HCT116 (cell line): ENCODE measurements at regions of chr17 and their contacts with region 1.

Region 1: DNA sequence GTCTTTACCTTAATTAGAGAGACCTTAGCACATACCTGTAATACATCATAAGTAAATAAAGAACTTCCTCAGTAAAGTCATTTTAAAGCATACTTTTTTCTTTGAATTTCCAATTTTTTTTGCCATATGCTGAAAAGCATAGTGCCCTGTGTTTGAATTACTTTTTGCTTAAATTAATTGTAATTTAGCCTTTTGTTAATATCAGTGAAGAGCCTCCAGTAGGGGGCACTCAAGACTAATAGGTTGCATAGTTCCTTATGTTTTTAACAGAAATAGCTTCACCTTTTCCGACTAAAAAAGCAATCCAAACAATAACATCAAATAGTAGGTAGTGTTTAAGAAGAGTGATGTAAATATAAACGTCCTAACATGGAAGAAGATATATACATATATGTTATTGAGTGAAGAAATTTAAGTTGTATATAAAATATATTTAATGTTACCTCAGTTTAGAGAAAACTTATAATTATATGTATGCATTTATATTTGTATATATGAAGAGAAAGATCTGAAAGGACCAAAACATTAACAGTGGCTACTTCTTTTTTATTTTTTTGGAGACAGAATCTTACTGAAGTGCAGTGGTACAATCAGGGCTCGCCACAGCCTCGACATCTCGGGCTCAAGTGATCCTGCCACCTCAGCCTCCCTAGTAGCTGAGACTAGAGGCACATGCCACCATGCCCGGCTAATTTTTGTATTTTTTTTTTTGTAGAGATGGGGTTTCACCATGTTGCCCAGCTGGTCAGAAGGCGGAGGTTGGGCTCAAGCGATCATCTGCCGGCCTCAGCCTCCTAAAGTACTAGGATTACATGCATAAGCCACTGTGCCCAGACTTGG is 18.8 kb downstream of the RAD51C start:
- DNase-seq: peak; percentile 56
- ATAC-seq: peak; percentile 64
- H3K4me3 ChIP-seq: no peak overlapping the region
- H3K27ac ChIP-seq: no peak overlapping the region
- H3K4me1 ChIP-seq: no peaks in the 10 kb centered on the region
- H3K27me3 ChIP-seq: no peaks in the 10 kb centered on the region
- CTCF ChIP-seq: peak; percentile 79 to 98 (median 85)
- POLR2A ChIP-seq: no peak
- RAD21 ChIP-seq: peak; percentile 94

Region 2: DNA sequence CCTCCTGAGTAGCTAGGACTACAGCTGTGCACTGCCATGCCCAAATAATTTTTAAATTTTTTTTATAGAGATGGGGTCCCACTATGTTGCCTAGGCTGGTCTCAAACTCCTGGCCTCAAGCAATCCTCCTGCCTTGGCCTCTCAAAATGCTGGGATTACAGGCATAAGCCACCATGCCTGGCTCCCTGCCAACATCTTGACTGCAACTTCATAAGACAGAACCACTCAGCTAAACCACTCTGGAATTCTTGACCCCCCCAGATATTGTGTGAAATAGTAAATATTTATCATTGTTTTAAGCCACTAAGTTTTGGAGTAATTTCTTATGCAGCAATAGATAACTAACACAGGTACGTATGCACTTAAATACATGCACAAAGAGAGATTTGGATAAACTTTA is 602.0 kb before region 1 on chr17:
- CTCF ChIA-PET with region 1: no interaction called
- POLR2A ChIA-PET with region 1: no interaction called
- RAD21 ChIA-PET with region 1: no interaction called
- intact Hi-C with region 1: no loop called
- DNase-seq: no peak
- ATAC-seq: no peak
- H3K4me3 ChIP-seq: no peak overlapping the region
- H3K27ac ChIP-seq: no peak overlapping the region
- H3K4me1 ChIP-seq: peaks cover 0 to 3% of the 10 kb centered on the region in 2 experiments; a peak in 1 of 4 replicates
- H3K27me3 ChIP-seq: no peaks in the 10 kb centered on the region
- CTCF ChIP-seq: no peak
- POLR2A ChIP-seq: no peak
- RAD21 ChIP-seq: no peak

Region 3: DNA sequence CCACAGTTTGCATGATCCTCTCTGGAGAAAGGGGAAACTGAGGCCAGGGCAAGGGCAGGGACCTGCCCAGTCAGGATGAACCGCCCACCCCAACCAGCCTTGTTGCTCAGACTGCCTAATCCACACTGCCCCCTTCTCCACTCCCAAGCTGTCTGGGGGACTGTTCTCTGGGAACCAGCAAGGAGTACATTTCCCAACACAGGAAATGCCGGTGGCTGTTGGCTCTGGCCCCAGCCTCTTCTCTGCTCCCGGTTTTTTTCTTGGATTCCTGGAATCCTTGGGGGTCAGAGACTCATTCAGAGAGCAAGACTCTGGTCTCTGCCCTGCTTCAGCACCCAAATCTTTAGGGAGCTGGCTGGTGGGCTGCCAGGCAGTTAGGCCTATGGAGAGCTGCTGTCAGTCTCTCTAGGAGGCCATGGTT is 186.0 kb before region 1 on chr17:
- CTCF ChIA-PET with region 1: no interaction called
- POLR2A ChIA-PET with region 1: no interaction called
- RAD21 ChIA-PET with region 1: no interaction called
- intact Hi-C with region 1: no loop called
- DNase-seq: no peak
- ATAC-seq: no peak
- H3K4me3 ChIP-seq: no peak overlapping the region
- H3K27ac ChIP-seq: no peak overlapping the region
- H3K4me1 ChIP-seq: no peaks in the 10 kb centered on the region; a peak in 1 of 4 replicates
- H3K27me3 ChIP-seq: no peaks in the 10 kb centered on the region
- CTCF ChIP-seq: no peak
- POLR2A ChIP-seq: no peak
- RAD21 ChIP-seq: no peak

Region 4: GRCh38 chr17:58728786-58729185 is 17.6 kb after region 1 on chr17:
- CTCF ChIA-PET with region 1: interaction called, 12 read pairs
- POLR2A ChIA-PET with region 1: no interaction called
- RAD21 ChIA-PET with region 1: no interaction called
- intact Hi-C with region 1: no loop called
- DNase-seq: no peak
- ATAC-seq: no peak
- H3K4me3 ChIP-seq: no peak overlapping the region
- H3K27ac ChIP-seq: no peak overlapping the region
- H3K4me1 ChIP-seq: no peaks in the 10 kb centered on the region
- H3K27me3 ChIP-seq: no peaks in the 10 kb centered on the region
- CTCF ChIP-seq: no peak
- POLR2A ChIP-seq: no peak
- RAD21 ChIP-seq: no peak

Region 5: DNA sequence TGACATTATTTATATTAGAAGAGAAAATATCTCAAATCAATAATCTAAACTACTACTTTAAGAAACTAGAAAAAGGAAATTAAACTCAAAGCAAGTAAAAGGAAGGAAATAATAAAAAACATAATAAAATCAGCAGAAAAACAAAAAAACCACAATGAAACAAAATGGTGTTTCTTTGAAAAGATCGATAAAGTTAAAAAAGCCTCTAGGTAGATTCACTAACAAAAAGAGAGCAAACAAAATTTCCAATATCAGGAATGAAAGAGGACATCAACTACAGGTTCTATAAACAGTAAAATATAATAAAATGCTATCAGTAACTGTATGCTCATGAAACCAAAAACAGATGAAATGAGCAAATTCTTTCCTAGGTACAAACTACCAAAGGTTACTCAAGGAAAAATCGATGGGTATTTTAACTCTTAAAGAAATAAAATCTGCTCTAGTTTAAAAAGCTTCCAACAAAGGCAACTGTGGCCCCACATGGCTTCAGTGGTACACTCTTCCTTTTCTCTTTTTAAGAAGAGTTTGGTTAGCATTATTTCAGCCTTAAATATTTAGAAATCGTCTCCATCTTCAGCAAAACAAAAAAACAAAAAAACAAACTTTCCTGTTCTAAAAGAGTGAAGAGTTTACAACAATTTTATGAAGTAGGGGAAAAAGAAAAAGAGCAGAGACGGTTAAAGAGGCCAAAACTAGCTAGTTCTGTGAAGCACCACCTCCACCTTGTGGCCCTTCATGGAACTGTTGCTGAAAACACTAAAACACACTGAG is 293.4 kb after region 1 on chr17:
- CTCF ChIA-PET with region 1: interaction called, 101 read pairs
- POLR2A ChIA-PET with region 1: interaction called, 11 read pairs
- RAD21 ChIA-PET with region 1: interaction called, 12 to 13 read pairs
- intact Hi-C with region 1: loop called (anchors 1 kb)
- DNase-seq: peak; percentile 59
- ATAC-seq: peak; percentile 88
- H3K4me3 ChIP-seq: no peak overlapping the region
- H3K27ac ChIP-seq: no peak overlapping the region
- H3K4me1 ChIP-seq: no peaks in the 10 kb centered on the region
- H3K27me3 ChIP-seq: no peaks in the 10 kb centered on the region
- CTCF ChIP-seq: peak; percentile 91 to 99 (median 98)
- POLR2A ChIP-seq: no peak
- RAD21 ChIP-seq: peak; percentile 97